Activated CD4-positive, alpha-beta T cell treated with anti-CD3 and anti-CD28 coated beads for 36 hours (primary cell): ENCODE measurements at regions of chr17 and their contacts with region 1.

Region 1: GRCh38 chr17:4997302-4998026 is at the starts of genes INCA1 and KIF1C:
- DNase-seq: peak; percentile 96
- ATAC-seq: peak; percentile 95
- H3K4me3 Mint-ChIP-seq: peak within 1 kb of the TSS; percentile 80
- H3K27ac Mint-ChIP-seq: peak within 1 kb of the TSS; percentile 55
- H3K4me1 Mint-ChIP-seq: peaks cover 20% of the 10 kb centered on the region
- H3K27me3 Mint-ChIP-seq: no peaks in the 10 kb centered on the region
- total RNA-seq, gene INCA1: 0.18 to 0.28 TPM
- total RNA-seq, gene KIF1C: 32.6 to 43.0 TPM

Region 2: DNA sequence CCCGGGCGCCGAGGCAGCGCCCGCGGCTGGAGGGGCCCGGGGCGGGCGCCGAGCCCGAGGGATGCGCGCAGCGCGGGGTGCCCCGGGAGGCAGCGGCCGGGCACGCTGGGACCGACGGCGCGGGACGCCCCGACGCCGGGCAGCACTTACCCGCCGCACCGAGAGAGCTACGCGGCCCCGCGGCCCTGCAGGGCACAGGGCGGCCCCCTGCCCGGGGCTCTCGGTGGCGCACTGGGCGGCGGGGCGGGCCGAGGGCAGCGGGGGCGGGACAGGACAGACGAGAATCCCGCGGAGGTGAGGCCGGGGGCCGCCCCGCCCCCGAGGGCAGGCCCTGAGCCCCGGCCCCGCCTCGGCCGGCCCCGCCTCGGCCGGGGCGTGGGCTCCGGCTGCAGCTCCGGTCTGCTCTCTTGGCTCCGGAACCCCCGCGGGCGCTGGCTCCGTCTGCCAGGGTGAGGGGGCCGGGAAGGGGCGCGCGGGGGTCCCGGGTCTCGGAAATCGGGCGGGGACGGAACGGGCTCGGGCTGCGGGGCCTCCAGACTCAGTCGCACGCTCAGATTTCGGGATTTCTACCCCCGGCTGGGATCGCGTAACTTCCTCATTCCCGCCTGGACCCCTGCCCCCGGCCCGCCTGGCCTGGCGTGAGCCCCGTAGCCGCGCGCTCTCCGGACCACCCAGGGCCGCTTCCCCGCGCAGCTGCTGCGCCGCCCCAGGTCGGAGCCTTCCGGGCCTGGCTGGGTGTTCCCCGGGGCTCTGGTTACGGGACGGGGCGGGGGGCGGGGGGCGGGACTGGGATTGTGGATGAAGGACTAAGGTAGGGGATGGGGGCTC is 190.5 kb before region 1 on chr17 and contains the start of gene PLD2:
- CTCF ChIA-PET with region 1: no interaction called
- POLR2A ChIA-PET with region 1: no interaction called
- intact Hi-C with region 1: loop called in 1 of 2 experiments (anchors 1 kb)
- DNase-seq: peak; percentile 93
- ATAC-seq: peak; percentile 98
- H3K4me3 Mint-ChIP-seq: peak within 1 kb of the TSS; percentile 73
- H3K27ac Mint-ChIP-seq: no peak within 1 kb of the TSS
- H3K4me1 Mint-ChIP-seq: peaks cover 7% of the 10 kb centered on the region
- H3K27me3 Mint-ChIP-seq: no peaks in the 10 kb centered on the region
- total RNA-seq, gene PLD2: 12.3 to 14.1 TPM

Region 3: GRCh38 chr17:4908301-4908700 is 89.2 kb before region 1 on chr17:
- CTCF ChIA-PET with region 1: no interaction called
- POLR2A ChIA-PET with region 1: no interaction called
- intact Hi-C with region 1: loop called in 1 of 2 experiments (anchors 1 kb)
- DNase-seq: peak; percentile 38
- ATAC-seq: peak; percentile 27
- H3K4me3 Mint-ChIP-seq: no peak overlapping the region
- H3K27ac Mint-ChIP-seq: no peak overlapping the region
- H3K4me1 Mint-ChIP-seq: peaks cover 4% of the 10 kb centered on the region
- H3K27me3 Mint-ChIP-seq: peaks cover 3% of the 10 kb centered on the region

Region 4: GRCh38 chr17:4986951-4987766 is 10.3 kb before region 1 on chr17 and contains the start of gene CAMTA2:
- CTCF ChIA-PET with region 1: interaction called, 6 read pairs
- POLR2A ChIA-PET with region 1: interaction called, 4 read pairs
- intact Hi-C with region 1: loop called (anchors 1 kb)
- DNase-seq: peak; percentile 91
- ATAC-seq: peak; percentile 87
- H3K4me3 Mint-ChIP-seq: peak within 1 kb of the TSS; percentile 93
- H3K27ac Mint-ChIP-seq: peak within 1 kb of the TSS; percentile 91
- H3K4me1 Mint-ChIP-seq: peaks cover 33% of the 10 kb centered on the region
- H3K27me3 Mint-ChIP-seq: no peaks in the 10 kb centered on the region
- total RNA-seq, gene CAMTA2: 98.2 to 124 TPM

Region 5: GRCh38 chr17:5065227-5065744 is 67.8 kb after region 1 on chr17:
- CTCF ChIA-PET with region 1: no interaction called
- POLR2A ChIA-PET with region 1: no interaction called
- intact Hi-C with region 1: no loop called
- DNase-seq: no peak
- ATAC-seq: no peak
- H3K4me3 Mint-ChIP-seq: no peak overlapping the region
- H3K27ac Mint-ChIP-seq: no peak overlapping the region
- H3K4me1 Mint-ChIP-seq: peaks cover 3% of the 10 kb centered on the region
- H3K27me3 Mint-ChIP-seq: no peaks in the 10 kb centered on the region

Region 6: GRCh38 chr17:5111402-5112204 is 114.1 kb after region 1 on chr17 and contains the start of gene ZNF232:
- CTCF ChIA-PET with region 1: no interaction called
- POLR2A ChIA-PET with region 1: no interaction called
- intact Hi-C with region 1: loop called in 1 of 2 experiments (anchors 1 kb)
- DNase-seq: peak; percentile 97
- ATAC-seq: peak; percentile 93
- H3K4me3 Mint-ChIP-seq: peak within 1 kb of the TSS; percentile 83
- H3K27ac Mint-ChIP-seq: peak within 1 kb of the TSS; percentile 73
- H3K4me1 Mint-ChIP-seq: peaks cover 27% of the 10 kb centered on the region
- H3K27me3 Mint-ChIP-seq: peaks cover 10% of the 10 kb centered on the region
- total RNA-seq, gene ZNF232: 16.1 to 16.2 TPM

Region 7: GRCh38 chr17:5396612-5397011 is 399.1 kb after region 1 on chr17:
- CTCF ChIA-PET with region 1: no interaction called
- POLR2A ChIA-PET with region 1: no interaction called
- intact Hi-C with region 1: no loop called
- DNase-seq: no peak
- ATAC-seq: peak; percentile 36
- H3K4me3 Mint-ChIP-seq: no peak overlapping the region
- H3K27ac Mint-ChIP-seq: no peak overlapping the region
- H3K4me1 Mint-ChIP-seq: peaks cover 2% of the 10 kb centered on the region
- H3K27me3 Mint-ChIP-seq: no peaks in the 10 kb centered on the region